Ascending aorta (tissue), 2 donors: ENCODE measurements at regions of chr5 and their contacts with region 1.

Region 1: DNA sequence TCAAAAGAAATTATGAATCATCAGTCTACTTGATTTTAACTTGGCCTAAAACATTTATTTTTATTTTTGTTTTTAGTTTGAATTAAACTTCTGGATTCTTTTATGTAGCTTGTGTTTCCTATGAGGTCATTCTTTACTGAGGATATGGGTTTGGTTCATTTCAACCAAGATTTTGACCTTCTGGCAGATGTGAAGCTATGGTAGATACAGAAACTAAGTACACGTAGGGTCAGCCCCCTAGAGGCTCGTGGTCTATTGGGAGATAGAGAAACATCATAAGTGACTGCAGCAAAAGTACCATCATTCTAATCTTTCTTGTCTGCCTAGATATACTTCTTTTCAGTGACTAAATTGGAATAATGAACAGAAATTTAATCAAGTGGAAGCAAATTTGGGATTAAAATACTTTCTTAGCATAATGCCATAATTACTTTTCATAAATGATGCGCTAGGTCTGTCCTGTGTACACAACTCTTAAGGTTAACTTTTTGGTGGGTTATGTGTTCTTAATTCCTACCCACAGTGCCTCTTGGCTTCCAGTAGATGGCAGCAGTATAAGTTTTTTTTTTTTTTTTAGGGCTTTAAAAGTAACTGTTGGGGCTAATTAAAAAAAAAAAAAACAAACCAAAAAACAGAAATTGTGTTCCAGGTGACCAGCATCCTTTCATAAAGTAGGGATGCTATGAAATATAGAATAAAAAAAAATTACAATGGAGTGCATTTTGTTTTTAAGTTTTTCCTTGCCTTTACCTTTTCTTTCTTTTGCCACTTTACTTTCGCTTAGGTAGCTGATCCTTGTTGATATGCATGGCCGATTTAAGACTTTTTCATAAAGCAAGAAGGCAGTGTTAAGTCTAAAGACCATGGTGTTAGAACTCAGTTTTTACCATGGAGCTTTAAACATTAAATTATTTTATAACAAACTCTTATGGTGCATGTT is 49.9 kb downstream of the LRRTM2 start:
- DNase-seq: no peak
- H3K4me3 ChIP-seq: no peak overlapping the region
- H3K27ac ChIP-seq: peak overlapping the region in 1 of 2 donors; percentile 40
- H3K4me1 ChIP-seq: peaks cover 0 to 20% of the 10 kb centered on the region in 2 donors
- H3K27me3 ChIP-seq: no peaks in the 10 kb centered on the region
- CTCF ChIP-seq: peak in 2 of 3 experiments; percentile 43 to 55

Region 2: DNA sequence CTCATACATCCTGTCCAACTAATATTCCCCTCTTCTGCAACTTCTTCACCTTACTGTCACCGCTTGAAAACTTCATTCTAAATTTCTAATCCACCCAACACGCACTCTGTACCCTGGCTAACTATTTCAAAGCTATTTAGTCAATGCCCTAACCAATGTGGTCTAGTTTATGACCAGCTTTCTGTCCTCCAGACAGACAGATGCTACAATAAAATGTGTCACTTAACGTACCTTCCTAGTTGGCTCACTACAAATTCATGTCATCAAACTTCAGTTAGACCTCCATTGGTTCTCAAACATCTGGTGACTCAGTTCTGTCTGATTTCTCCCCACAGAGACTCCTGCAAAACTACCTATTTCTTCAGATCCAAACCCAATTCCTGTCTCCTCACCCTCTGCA is 850.0 kb before region 1 on chr5:
- intact Hi-C with region 1: no loop called
- DNase-seq: no peak
- H3K4me3 ChIP-seq: no peak overlapping the region
- H3K27ac ChIP-seq: no peak overlapping the region
- H3K4me1 ChIP-seq: no peaks in the 10 kb centered on the region
- H3K27me3 ChIP-seq: no peaks in the 10 kb centered on the region
- CTCF ChIP-seq: no peak

Region 3: DNA sequence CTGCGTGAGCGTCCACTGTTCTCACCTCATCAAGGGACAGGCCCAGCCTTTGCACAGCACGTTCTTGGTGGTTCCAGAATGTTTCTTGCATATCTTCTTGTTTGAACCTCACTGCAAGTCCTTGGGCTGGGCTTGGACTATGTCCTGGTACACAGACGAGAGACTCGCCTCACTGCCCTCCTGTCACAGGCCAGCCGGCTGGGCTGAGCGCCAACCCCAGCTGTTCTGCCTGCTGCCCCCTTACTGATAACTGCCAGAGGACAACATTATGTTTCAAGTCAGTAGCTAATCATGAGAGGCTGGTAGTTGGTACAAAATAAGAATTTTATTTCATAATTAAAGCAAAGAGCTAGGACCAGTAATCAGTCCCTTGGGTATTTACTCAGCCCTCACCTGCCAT is 102.8 kb after region 1 on chr5:
- intact Hi-C with region 1: loop called (anchors 5 kb)
- DNase-seq: peak in 1 of 2 donors; percentile 71
- H3K4me3 ChIP-seq: no peak overlapping the region
- H3K27ac ChIP-seq: peak overlapping the region; percentile 62 to 77
- H3K4me1 ChIP-seq: peaks cover 3 to 24% of the 10 kb centered on the region in 2 donors
- H3K27me3 ChIP-seq: no peaks in the 10 kb centered on the region
- CTCF ChIP-seq: no peak